Activated naive CD4-positive, alpha-beta T cell treated with anti-CD3 and anti-CD28 coated beads for 36 hours (primary cell): ENCODE measurements at regions of chr7 and their contacts with region 1.

Region 1: GRCh38 chr7:121126801-121127534 is 138.5 kb downstream of the CPED1 start:
- DNase-seq: no peak
- H3K4me3 Mint-ChIP-seq: no peak overlapping the region
- H3K27ac Mint-ChIP-seq: no peak overlapping the region
- H3K4me1 Mint-ChIP-seq: no peaks in the 10 kb centered on the region
- H3K27me3 Mint-ChIP-seq: peaks cover 8% of the 10 kb centered on the region

Region 2: GRCh38 chr7:121337398-121337797 is 210.4 kb after region 1 on chr7:
- CTCF ChIA-PET with region 1: no interaction called
- intact Hi-C with region 1: loop called (anchors 2 kb)
- DNase-seq: peak; percentile 9
- H3K4me3 Mint-ChIP-seq: no peak overlapping the region
- H3K27ac Mint-ChIP-seq: no peak overlapping the region
- H3K4me1 Mint-ChIP-seq: no peaks in the 10 kb centered on the region
- H3K27me3 Mint-ChIP-seq: peaks cover 4% of the 10 kb centered on the region